ENCODE measurements at regions of chr1 and their contacts with region 1.

Region 1: DNA sequence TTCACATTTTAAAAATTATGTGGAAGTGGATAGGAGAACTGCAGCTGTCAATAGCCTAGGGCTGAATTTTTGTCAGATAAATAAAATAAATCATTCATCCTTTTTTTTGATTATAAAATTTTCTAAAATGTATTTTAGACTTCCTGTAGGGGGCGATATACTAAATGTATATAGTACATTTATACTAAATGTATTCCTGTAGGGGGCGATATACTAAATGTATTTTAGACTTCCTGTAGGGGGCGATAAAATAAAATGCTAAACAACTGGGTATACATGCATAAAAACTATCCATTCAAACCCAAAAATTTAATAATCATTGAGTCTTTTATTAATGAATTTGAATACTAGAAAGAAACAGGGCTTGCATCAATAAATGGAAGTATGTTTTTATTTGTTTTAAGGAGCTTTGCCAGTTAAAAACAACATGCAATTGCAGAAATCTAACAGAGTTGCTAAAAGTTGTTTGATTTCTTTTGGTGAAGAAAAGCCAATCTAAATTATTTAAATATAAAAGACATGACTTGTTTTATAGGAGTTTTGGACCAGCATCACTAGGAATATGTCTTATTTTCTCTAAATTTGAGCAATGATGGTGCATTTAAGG is 31.4 kb downstream of the CLCA1 start:
- DNase-seq: no peak
- H3K4me3 ChIP-seq: no peak overlapping the region
- H3K27ac ChIP-seq: no peak overlapping the region
- H3K4me1 ChIP-seq: peaks cover 8% of the 10 kb centered on the region
- H3K27me3 ChIP-seq: no peaks in the 10 kb centered on the region
- CTCF ChIP-seq: peak; percentile 86

Region 2: DNA sequence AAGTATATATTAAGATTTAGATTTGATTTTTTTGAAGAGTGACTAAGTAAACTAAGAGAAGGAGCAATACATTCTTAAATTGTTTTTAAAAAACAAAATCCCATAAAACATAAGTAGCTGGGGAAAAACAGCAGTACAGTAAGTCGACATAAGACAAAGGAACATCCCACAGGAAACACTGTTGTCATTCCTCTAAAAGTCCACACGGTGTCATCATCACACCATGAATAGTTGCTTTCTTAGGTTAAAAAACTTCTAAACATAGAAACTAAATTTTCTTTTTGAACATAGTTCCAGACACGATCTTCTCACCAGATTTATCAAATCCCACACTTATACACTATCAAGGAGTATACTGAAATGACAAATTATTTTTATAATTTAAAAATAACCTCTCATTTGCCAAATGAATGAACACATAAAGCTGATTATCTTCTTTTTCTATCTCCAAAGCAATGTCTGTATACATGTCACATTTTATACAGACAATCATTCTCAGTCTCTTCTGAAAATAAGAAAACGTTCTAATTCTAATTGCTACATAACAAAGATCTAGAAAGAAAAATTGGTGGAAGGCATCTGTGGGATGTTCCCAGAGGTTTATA is 119.7 kb before region 1 on chr1:
- intact Hi-C with region 1: loop called (anchors 5 kb)
- DNase-seq: no peak
- H3K4me3 ChIP-seq: no peak overlapping the region
- H3K27ac ChIP-seq: no peak overlapping the region
- H3K4me1 ChIP-seq: no peaks in the 10 kb centered on the region
- H3K27me3 ChIP-seq: no peaks in the 10 kb centered on the region
- CTCF ChIP-seq: peak; percentile 79

Region 3: DNA sequence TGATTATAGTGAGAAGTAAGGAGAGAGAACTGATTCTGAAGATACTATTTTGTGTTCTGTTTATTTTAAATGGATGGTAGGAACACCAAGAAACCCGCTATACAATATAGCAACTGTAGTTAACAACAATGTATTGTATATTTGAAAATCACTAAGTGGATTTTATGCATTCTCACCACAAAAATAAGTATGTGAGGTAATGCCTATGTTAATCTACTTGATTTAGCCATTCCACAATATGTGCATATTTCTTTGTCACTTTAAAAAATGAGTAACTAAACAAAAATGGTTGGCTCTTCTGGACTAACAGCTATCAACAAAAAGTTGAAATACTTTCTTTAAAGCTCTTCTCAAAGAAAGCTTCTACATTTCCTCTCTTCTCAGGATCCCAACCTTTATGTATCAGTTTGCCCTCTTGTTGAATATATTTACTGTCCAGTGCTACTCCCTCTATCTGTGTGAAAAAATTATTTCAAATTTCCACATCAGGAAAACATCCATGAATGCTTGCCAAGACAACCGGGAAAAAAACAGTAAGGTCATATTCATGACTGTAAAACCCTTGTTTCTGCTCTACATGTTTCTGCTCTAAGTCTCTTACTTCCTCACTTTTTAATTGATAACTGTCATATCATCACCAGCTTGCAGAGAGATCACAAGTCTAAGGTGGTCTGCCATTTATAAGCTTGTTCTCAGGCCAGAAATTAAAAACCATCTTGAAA is 73.8 kb after region 1 on chr1:
- intact Hi-C with region 1: no loop called
- DNase-seq: no peak
- H3K4me3 ChIP-seq: no peak overlapping the region
- H3K27ac ChIP-seq: no peak overlapping the region
- H3K4me1 ChIP-seq: no peaks in the 10 kb centered on the region
- H3K27me3 ChIP-seq: no peaks in the 10 kb centered on the region
- CTCF ChIP-seq: no peak

Region 4: DNA sequence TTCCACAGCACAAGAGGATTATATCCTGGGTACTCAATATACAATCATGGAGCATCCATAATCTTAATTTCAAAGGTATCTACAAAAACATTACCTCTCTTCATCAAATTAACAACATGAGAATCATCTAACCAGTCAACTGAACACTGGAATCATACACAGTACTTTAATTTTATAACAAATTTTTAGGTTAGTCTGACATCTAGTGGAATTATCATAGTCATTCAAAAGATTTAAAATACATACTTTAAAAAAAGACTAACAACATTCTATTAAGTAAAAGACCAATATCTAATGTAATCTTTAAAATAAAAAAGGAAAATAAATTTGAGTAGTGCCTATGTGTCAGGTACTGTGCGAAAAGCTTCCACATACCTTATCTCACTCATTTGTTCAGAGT is 187.5 kb after region 1 on chr1:
- intact Hi-C with region 1: loop called (anchors 5 kb)
- DNase-seq: no peak
- H3K4me3 ChIP-seq: no peak overlapping the region
- H3K27ac ChIP-seq: no peak overlapping the region
- H3K4me1 ChIP-seq: no peaks in the 10 kb centered on the region
- H3K27me3 ChIP-seq: no peaks in the 10 kb centered on the region
- CTCF ChIP-seq: no peak